Activated CD8-positive, alpha-beta T cell treated with anti-CD3 and anti-CD28 coated beads for 36 hours (primary cell): ENCODE measurements at regions of chr2 and their contacts with region 1.

Region 1: DNA sequence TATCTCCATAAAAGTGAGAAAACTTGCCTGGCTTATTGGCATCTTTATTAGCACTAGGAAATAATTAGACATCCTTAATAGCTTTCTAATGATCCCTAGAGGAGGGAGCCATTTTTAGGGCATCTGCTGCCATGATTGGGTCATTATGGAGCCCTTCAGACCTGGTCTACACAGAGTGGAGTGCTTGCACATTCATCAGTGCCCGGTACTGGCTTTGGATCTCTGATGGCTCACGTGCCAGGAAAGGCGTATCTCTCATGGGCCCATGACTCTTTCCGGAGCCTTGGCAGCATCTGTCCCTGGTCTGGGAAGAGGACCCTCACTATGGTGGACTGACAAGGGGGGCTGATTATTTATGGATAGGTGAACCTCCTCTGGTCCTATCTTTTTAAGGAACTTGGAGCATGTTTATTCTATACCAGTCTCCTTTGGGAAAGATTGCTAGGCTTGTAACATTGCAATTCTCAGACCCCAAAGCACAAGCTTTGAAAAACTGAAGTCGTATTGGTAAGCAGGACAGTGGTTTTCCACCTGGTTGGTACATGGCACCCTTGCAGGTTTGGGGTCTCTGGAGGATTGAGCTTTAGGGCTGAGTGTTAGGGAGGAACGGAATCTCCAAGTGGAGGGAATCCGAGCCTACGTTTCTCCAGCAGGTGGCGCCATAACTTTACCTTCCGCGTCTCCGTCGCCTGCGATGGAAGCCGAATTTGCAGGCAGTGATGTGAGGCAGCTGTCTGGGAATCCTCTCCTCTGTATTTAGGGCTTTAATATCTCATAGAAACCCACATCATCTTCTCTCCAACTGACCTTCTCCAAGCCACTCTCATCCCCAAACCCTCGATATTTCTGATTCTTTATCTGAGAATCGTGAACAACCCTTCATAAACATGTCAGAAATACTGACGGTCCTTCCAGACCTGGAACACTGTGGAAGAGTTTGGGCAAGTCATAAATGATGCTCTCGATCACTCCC is 27.8 kb downstream of the SIX2 start:
- DNase-seq: peak; percentile 78
- ATAC-seq: peak; percentile 51
- H3K4me3 Mint-ChIP-seq: no peak overlapping the region
- H3K27ac Mint-ChIP-seq: no peak overlapping the region
- H3K4me1 Mint-ChIP-seq: peaks cover 2% of the 10 kb centered on the region
- H3K27me3 Mint-ChIP-seq: peaks cover 11% of the 10 kb centered on the region
- CTCF ChIP-seq: peak; percentile 83

Region 2: DNA sequence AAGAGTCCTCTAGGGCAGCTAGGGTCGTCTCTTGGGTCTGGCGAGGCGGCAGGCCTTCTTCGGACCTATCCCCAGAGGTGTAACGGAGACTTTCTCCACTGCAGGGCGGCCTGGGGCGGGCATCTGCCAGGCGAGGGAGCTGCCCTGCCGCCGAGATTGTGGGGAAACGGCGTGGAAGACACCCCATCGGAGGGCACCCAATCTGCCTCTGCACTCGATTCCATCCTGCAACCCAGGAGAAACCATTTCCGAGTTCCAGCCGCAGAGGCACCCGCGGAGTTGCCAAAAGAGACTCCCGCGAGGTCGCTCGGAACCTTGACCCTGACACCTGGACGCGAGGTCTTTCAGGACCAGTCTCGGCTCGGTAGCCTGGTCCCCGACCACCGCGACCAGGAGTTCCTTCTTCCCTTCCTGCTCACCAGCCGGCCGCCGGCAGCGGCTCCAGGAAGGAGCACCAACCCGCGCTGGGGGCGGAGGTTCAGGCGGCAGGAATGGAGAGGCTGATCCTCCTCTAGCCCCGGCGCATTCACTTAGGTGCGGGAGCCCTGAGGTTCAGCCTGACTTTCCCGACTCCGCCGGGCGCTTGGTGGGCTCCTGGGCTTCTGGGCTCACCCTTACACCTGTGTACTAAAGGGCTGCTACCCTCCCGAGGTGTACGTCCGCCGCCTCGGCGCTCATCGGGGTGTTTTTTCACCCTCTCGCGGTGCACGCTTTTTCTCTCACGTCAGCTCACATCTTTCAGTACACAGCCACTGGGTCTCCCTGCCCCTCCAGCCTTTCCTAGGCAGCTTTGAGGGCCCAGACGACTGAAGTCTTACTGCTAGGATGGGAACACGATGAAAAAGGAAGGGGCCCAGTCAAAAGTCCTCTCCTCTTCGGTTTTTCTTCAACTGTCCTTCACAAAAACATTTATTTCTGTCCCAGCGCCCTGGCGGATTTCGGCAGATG is 19.8 kb after region 1 on chr2:
- CTCF ChIA-PET with region 1: interaction called, 10 read pairs
- POLR2A ChIA-PET with region 1: no interaction called
- intact Hi-C with region 1: no loop called
- DNase-seq: no peak
- ATAC-seq: no peak
- H3K4me3 Mint-ChIP-seq: peak overlapping the region; percentile 44
- H3K27ac Mint-ChIP-seq: no peak overlapping the region
- H3K4me1 Mint-ChIP-seq: peaks cover 12% of the 10 kb centered on the region
- H3K27me3 Mint-ChIP-seq: peaks cover 76% of the 10 kb centered on the region
- CTCF ChIP-seq: no peak

Region 3: GRCh38 chr2:45014016-45014702 is 32.7 kb after region 1 on chr2:
- CTCF ChIA-PET with region 1: interaction called, 11 read pairs
- POLR2A ChIA-PET with region 1: interaction called, 3 read pairs
- intact Hi-C with region 1: no loop called
- DNase-seq: peak; percentile 52
- ATAC-seq: peak; percentile 80
- H3K4me3 Mint-ChIP-seq: no peak overlapping the region
- H3K27ac Mint-ChIP-seq: no peak overlapping the region
- H3K4me1 Mint-ChIP-seq: peaks cover 10% of the 10 kb centered on the region
- H3K27me3 Mint-ChIP-seq: peaks cover 70% of the 10 kb centered on the region
- CTCF ChIP-seq: peak; percentile 74